ENCODE measurements at regions of chr20 and their contacts with region 1.

Region 1: GRCh38 chr20:58870239-58871014 is 17.9 kb downstream of the GNAS start:
- DNase-seq: peak; percentile 64 to 89 (median 78)
- H3K4me3 ChIP-seq: no peak overlapping the region
- H3K27ac ChIP-seq: no peak overlapping the region
- H3K4me1 ChIP-seq: peaks cover 0 to 3% of the 10 kb centered on the region in 2 donors
- H3K27me3 ChIP-seq: no peaks in the 10 kb centered on the region
- CTCF ChIP-seq: peak; percentile 81 to 89 (median 86)
- POLR2A ChIP-seq: no peak

Region 2: DNA sequence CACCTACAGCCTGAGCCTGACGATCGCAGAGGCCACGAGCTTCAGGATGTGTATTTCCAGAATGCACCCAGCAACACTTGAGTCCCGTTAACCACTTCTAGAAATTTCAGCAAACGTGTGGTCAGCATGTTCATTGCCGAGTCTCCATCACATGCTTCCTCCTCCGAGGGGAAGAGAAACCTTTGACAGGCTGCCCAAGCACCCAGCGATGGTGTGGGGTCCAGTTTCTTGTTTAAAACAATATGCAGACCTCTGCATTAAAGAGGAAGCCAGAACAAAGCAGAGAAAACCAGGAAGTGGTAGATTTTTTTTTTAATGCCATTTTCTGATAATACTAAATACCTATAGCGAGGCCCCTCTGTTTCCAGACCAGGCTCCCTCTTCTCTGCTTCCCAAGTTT is 91.7 kb before region 1 on chr20:
- intact Hi-C with region 1: no loop called
- DNase-seq: peak in 1 of 7 donors; percentile 38
- H3K4me3 ChIP-seq: no peak overlapping the region
- H3K27ac ChIP-seq: no peak overlapping the region
- H3K4me1 ChIP-seq: no peaks in the 10 kb centered on the region
- H3K27me3 ChIP-seq: peaks cover 2% of the 10 kb centered on the region
- CTCF ChIP-seq: no peak
- POLR2A ChIP-seq: no peak

Region 3: GRCh38 chr20:58930496-58931004 is 60.1 kb after region 1 on chr20:
- intact Hi-C with region 1: no loop called
- DNase-seq: no peak
- H3K4me3 ChIP-seq: no peak overlapping the region
- H3K27ac ChIP-seq: no peak overlapping the region
- H3K4me1 ChIP-seq: no peaks in the 10 kb centered on the region
- H3K27me3 ChIP-seq: no peaks in the 10 kb centered on the region
- CTCF ChIP-seq: no peak
- POLR2A ChIP-seq: no peak

Region 4: DNA sequence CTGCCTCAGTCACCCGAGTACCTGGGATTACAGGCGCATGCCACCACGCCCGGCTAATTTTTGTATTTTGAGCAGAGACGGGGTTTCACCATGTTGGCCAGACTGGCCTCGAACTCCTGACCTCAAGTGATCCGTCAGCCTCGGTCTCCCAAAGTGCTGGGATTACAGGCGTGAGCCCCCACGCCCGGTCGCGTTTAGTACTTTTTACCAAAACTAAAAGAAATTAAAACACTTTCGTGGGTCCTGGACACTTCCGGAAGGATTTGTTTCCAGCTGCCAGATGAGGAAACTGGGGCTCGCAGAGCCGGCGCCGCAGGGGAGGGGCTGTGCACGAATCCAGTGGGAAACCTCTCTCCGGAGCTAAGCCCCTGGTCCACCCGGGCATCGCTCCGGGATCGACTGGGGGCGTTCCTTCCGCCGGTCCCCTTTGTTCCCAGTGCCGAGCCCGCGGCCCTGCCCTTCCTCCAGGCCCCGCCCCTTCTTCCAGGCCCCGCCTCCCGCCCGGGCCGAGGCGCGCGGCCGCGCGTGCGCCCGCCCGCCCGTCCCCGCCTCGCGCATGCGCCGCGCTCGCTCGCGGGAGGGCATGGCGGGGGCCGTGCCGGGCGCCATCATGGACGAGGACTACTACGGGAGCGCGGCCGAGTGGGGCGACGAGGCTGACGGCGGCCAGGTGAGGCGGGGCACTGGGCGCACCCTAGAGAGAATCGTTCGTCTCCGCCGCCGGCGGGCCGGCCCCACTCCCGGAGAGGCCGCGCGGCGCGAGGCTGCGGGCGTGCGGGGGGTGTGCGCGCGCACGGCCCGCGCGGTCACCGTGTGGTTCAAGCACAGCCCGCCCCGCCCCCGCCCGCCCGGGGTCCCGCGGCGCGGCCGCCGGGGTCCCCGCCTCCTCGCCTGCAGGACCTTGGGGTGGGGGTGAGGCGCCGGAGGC is 110.5 kb after region 1 on chr20 and contains the start of gene NELFCD:
- intact Hi-C with region 1: loop called in 1 of 2 experiments (anchors 10 kb)
- DNase-seq: peak; percentile 78 to 91 (median 86)
- H3K4me3 ChIP-seq: peak within 1 kb of the TSS; percentile 36 to 99 (median 67)
- H3K27ac ChIP-seq: peak within 1 kb of the TSS in 3 of 5 donors; percentile 53 to 92 (median 58)
- H3K4me1 ChIP-seq: peaks cover 4 to 21% of the 10 kb centered on the region in 2 donors
- H3K27me3 ChIP-seq: no peaks in the 10 kb centered on the region
- CTCF ChIP-seq: no peak
- POLR2A ChIP-seq: peak; percentile 31 to 57
- total RNA-seq, gene NELFCD: 47.1 to 82.8 (median 67.3) TPM

Region 5: DNA sequence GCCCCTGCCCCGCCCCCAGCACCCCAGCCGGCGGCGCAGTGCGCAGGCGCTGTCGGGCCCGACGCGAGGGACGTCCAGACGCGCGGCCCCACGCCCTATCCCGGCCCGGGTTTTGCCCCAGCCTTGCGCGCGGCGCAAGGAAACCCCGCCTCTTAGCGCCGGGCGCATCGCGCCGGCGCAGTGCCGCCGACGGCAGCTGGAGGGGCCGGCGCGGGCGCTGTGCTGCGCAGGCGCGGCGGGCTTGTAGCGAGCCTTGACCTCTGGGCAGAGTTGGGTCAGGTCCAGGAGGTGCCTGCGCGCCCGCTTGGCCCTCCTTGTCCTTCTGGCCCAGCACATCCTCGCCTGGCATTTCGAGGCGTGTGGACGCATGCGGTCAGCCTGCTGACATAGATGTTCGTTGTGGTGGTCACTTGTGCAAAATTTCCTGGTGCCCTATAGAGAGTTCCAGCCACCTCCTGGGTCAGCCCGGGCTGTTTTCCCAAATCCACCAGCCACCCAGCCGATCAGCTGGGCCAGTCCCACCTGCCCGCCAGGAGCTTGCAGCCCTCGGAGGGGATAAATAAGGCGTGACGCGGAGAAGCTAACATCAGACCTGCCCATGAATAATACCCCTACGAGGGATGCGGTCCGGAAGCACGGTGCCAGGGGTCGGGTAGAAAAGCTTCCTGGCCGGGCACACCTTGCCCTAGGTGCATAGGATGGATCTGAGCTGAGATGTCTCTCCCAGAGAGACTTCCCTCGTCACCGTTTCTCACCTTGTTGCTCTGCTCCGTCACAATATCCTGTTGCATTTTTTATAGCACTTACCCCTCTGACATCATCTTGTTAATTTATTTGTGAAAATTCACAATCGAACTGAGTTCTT is 172.6 kb after region 1 on chr20:
- intact Hi-C with region 1: loop called in 1 of 2 experiments (anchors 10 kb)
- DNase-seq: peak; percentile 91 to 94 (median 93)
- H3K4me3 ChIP-seq: peak overlapping the region in 3 of 4 donors; percentile 36 to 95 (median 56)
- H3K27ac ChIP-seq: peak overlapping the region; percentile 78 to 95 (median 82)
- H3K4me1 ChIP-seq: peaks cover 17 to 36% of the 10 kb centered on the region in 2 donors
- H3K27me3 ChIP-seq: no peaks in the 10 kb centered on the region
- CTCF ChIP-seq: peak in 2 of 6 experiments; percentile 25 to 44
- POLR2A ChIP-seq: no peak

Region 6: DNA sequence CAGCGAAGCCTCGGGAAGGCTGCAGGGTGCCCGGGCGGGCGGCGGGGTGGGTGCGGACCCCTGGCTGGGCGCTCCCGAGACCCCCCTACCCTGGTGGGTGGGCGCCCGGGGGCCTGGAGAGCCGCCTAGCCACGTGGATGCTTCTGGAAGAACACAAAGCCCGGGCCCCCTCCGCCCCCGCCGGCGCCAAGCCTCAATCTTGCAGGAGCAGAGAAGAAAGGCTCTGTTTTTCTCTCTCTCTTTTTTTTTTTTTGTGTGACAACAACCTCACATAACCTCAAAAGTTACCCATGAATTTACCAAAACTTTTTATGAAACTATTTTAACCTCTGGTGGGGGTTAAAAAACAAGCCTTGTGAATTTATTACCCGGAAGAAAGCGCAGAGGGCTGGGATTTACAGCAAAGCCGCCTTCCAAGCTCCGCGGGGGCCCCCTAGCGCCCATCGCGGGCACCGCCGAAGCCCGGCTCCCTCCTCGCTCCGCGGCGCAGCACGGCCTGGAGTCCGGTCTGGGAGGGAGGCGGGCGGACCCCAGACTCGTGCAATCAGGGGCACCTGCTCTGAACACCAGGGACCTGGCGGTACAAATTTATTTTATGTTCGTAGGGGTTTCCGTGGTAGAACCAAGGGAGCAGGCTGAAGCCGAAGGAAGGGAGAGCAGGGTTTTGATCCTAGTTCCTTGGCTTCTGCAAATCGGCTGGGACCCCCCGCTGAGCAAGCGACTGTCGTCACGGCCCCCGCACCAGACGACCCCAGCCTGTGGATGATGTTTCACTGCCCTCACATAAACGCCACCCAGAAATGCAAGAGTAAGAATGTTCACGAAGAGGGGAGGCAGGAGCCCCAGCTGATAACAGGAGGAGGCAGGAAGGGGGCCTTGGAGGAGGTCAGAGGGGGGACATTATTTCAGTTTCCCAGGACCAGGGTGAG is 352.1 kb after region 1 on chr20:
- intact Hi-C with region 1: loop called (anchors 2 to 5 kb)
- DNase-seq: peak; percentile 61 to 88 (median 80)
- H3K4me3 ChIP-seq: peak overlapping the region in 2 of 4 donors; percentile 33 to 71
- H3K27ac ChIP-seq: peak overlapping the region in 2 of 5 donors; percentile 15 to 28
- H3K4me1 ChIP-seq: peaks cover 6 to 22% of the 10 kb centered on the region in 2 donors
- H3K27me3 ChIP-seq: peaks cover 26% of the 10 kb centered on the region
- CTCF ChIP-seq: peak; percentile 74 to 94 (median 85)
- POLR2A ChIP-seq: no peak

Region 7: GRCh38 chr20:59403261-59403961 is 533.0 kb after region 1 on chr20:
- intact Hi-C with region 1: loop called in 1 of 2 experiments (anchors 5 kb)
- DNase-seq: peak; percentile 18 to 73 (median 51)
- H3K4me3 ChIP-seq: no peak overlapping the region
- H3K27ac ChIP-seq: peak overlapping the region in 1 of 5 donors; percentile 52
- H3K4me1 ChIP-seq: peaks cover 0 to 11% of the 10 kb centered on the region in 2 donors
- H3K27me3 ChIP-seq: peaks cover 24% of the 10 kb centered on the region
- CTCF ChIP-seq: peak; percentile 70 to 96 (median 80)
- POLR2A ChIP-seq: no peak

Region 8: GRCh38 chr20:59455402-59456341 is 585.2 kb after region 1 on chr20:
- intact Hi-C with region 1: loop called in 1 of 2 experiments (anchors 5 kb)
- DNase-seq: peak; percentile 39 to 70 (median 58)
- H3K4me3 ChIP-seq: no peak overlapping the region
- H3K27ac ChIP-seq: no peak overlapping the region
- H3K4me1 ChIP-seq: no peaks in the 10 kb centered on the region
- H3K27me3 ChIP-seq: no peaks in the 10 kb centered on the region
- CTCF ChIP-seq: peak; percentile 46 to 74 (median 59)
- POLR2A ChIP-seq: no peak

Region 9: GRCh38 chr20:59678288-59678687 is 807.9 kb after region 1 on chr20:
- intact Hi-C with region 1: no loop called
- DNase-seq: peak in 1 of 7 donors; percentile 3
- H3K4me3 ChIP-seq: no peak overlapping the region
- H3K27ac ChIP-seq: no peak overlapping the region
- H3K4me1 ChIP-seq: no peaks in the 10 kb centered on the region
- H3K27me3 ChIP-seq: no peaks in the 10 kb centered on the region
- CTCF ChIP-seq: no peak
- POLR2A ChIP-seq: no peak